ENCODE measurements at regions of chr2 and their contacts with region 1.

Region 1: DNA sequence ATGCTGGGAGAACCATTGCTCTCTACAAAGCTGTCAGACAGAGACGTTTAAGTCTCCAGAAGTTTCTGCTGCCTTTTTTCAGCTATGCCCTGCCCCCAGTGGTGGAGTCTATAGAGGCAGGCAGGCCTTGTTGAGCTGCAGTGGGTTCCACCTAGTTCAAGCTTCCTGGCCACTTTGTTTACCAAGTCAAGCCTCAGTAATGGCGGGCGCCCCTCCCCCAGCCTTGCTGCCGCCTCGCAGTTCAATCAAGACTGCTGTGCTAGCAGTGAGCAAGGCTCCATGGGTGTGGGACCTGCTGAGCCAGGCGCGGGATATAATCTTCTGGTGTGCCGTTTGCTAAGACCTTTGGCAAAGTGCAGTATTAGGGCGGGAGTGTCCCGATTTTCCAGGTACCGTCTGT is 52.7 kb upstream of the SCYGR2 start:
- DNase-seq: no peak
- ATAC-seq: no peak
- H3K4me3 Mint-ChIP-seq: no peak overlapping the region
- H3K27ac Mint-ChIP-seq: no peak overlapping the region
- H3K4me1 Mint-ChIP-seq: peaks cover 6% of the 10 kb centered on the region
- H3K27me3 Mint-ChIP-seq: no peaks in the 10 kb centered on the region
- CTCF ChIP-seq: no peak

Region 2: GRCh38 chr2:227351639-227352038 is 194.4 kb before region 1 on chr2:
- CTCF ChIA-PET with region 1: no interaction called
- POLR2A ChIA-PET with region 1: no interaction called
- intact Hi-C with region 1: no loop called
- DNase-seq: no peak
- ATAC-seq: no peak
- H3K4me3 Mint-ChIP-seq: no peak overlapping the region
- H3K27ac Mint-ChIP-seq: peak overlapping the region; percentile 35
- H3K4me1 Mint-ChIP-seq: peaks cover 6% of the 10 kb centered on the region
- H3K27me3 Mint-ChIP-seq: no peaks in the 10 kb centered on the region
- CTCF ChIP-seq: no peak

Region 3: DNA sequence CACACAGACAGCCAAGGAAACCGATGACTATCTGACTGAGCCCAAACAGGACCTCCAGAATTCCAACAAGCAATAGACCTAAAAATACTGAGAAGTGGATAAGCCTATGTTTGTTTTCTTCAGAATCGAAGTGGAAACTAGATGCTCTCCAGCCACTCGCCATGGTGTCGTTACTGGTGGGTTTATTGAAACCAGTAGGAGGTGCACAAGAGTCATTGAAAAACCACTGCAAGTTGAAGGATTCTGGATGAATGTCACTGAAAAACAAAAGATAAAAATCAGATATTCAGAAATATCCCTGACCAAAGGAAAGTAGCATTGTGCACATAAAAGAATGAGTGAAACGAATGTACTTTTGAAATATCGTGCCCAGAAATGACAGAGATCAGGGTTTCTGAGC is 182.2 kb before region 1 on chr2:
- CTCF ChIA-PET with region 1: no interaction called
- POLR2A ChIA-PET with region 1: no interaction called
- intact Hi-C with region 1: loop called (anchors 5 kb)
- DNase-seq: no peak
- ATAC-seq: no peak
- H3K4me3 Mint-ChIP-seq: no peak overlapping the region
- H3K27ac Mint-ChIP-seq: no peak overlapping the region
- H3K4me1 Mint-ChIP-seq: peaks cover 4% of the 10 kb centered on the region
- H3K27me3 Mint-ChIP-seq: no peaks in the 10 kb centered on the region
- CTCF ChIP-seq: no peak

Region 4: DNA sequence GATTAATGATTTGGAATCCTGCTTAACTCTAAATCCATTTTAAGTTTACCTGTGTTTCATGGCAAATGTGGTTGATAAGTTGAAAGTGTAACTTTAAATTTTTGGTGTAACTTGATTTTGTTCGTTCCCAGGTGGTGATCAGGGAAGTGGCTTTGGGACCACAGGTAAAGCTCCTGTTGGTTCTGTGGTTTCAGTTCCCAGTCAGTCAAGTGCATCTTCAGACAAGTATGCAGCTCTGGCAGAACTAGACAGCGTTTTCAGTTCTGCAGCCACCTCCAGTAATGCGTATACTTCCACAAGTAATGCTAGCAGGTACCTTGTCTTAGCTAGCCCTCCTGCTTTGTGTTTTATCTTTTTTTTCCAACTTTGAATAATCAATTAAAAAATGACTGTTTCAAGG is 11.3 kb before region 1 on chr2:
- CTCF ChIA-PET with region 1: no interaction called
- POLR2A ChIA-PET with region 1: no interaction called
- intact Hi-C with region 1: loop called (anchors 2 kb)
- DNase-seq: no peak
- ATAC-seq: no peak
- H3K4me3 Mint-ChIP-seq: no peak overlapping the region
- H3K27ac Mint-ChIP-seq: no peak overlapping the region
- H3K4me1 Mint-ChIP-seq: peaks cover 9% of the 10 kb centered on the region
- H3K27me3 Mint-ChIP-seq: no peaks in the 10 kb centered on the region
- CTCF ChIP-seq: no peak

Measured in activated B cell treated with CpG ODN at 0.5 μM for 24 hours (primary cell).